ENCODE measurements at regions of chr19 and their contacts with region 1.

Region 1: DNA sequence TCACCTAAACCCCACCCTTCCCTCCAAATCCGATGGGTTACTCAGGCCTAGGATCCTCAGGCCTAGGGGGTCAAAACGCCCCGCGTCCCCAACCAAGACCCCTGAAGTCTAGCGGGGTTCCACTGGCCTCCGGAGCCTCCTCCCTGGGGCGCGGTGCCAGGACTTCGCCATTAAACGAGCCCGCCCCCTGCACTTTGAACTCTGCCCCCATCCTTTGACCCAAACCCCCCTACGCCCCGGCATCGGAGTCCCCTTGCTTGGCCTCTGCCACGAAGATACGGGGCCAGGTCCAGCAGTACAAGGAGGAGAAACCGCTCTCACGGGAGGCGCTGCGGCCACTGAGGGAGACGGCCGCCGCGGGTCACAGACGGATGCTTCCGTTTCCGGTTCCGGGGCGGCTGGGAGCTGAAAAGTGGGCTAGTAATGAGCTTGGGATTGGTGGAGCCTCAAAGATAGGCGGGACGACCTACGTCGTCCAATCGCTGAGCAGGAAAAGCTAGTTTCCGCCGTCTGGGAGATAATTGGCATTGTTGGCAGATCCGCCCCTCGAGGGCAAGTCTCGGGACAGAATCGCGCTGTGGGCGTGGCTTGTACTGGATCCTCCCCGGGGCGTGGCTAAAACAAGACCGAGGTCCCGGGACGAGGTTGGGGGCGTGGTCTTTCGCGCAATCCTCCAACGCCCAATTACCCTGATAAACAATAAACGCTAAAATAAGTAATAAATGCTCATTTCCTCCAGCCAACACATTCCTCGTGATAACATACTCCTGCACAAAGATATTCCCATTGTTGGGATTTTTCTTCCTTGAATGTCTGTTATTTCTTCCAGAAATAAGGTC is 5.7 kb upstream of the ZNF77 start:
- DNase-seq: peak; percentile 99 to 100 (median 100)
- H3K4me3 ChIP-seq: peak overlapping the region; percentile 62 to 87
- H3K4me3 Mint-ChIP-seq: peak overlapping the region; percentile 93 to 98 (median 96)
- H3K27ac ChIP-seq: peak overlapping the region; percentile 93
- H3K27ac Mint-ChIP-seq: peak overlapping the region; percentile 92 to 100 (median 99)
- H3K4me1 ChIP-seq: peaks cover 22% of the 10 kb centered on the region
- H3K4me1 Mint-ChIP-seq: peaks cover 17 to 35% (median 23%) of the 10 kb centered on the region in 4 donors
- H3K27me3 ChIP-seq: no peaks in the 10 kb centered on the region
- H3K27me3 Mint-ChIP-seq: no peaks in the 10 kb centered on the region

Region 2: GRCh38 chr19:2900296-2901252 is 49.9 kb before region 1 on chr19 and contains the start of gene ZNF57:
- CTCF ChIA-PET with region 1: interaction called, 3 read pairs
- POLR2A ChIA-PET with region 1: interaction called, 12 read pairs
- intact Hi-C with region 1: loop called (anchors 2 kb)
- DNase-seq: peak; percentile 92 to 98 (median 97)
- H3K4me3 ChIP-seq: peak within 1 kb of the TSS; percentile 52 to 90
- H3K4me3 Mint-ChIP-seq: peak within 1 kb of the TSS; percentile 93 to 100 (median 96)
- H3K27ac ChIP-seq: peak within 1 kb of the TSS; percentile 47
- H3K27ac Mint-ChIP-seq: peak within 1 kb of the TSS; percentile 81 to 94 (median 92)
- H3K4me1 ChIP-seq: peaks cover 15% of the 10 kb centered on the region
- H3K4me1 Mint-ChIP-seq: peaks cover 15 to 29% (median 20%) of the 10 kb centered on the region in 4 donors
- H3K27me3 ChIP-seq: no peaks in the 10 kb centered on the region
- H3K27me3 Mint-ChIP-seq: no peaks in the 10 kb centered on the region
- total RNA-seq, gene ZNF57: 4.2 to 4.7 TPM

Region 3: DNA sequence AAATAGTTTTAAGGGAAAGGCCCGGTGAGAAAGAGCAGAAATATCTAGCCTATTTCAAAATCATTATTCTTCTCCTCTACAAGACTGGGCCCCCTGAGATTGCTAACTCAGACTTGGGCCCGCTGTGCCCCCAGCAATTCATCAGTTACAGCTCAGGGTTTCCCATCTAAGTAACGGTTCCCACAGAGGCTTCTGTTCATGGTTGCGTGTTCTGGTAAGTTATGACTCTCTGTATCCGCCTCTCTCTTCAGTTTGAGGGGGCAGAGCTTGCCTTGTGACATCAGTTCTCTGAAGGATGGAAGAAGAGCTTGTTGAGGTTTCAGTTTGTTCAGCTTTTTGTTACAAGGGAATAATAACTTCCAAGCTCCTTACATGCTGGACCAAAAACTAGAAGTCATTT is 38.2 kb before region 1 on chr19:
- CTCF ChIA-PET with region 1: no interaction called
- POLR2A ChIA-PET with region 1: no interaction called
- intact Hi-C with region 1: no loop called
- DNase-seq: no peak
- H3K4me3 ChIP-seq: no peak overlapping the region
- H3K4me3 Mint-ChIP-seq: no peak overlapping the region
- H3K27ac ChIP-seq: no peak overlapping the region
- H3K27ac Mint-ChIP-seq: no peak overlapping the region
- H3K4me1 ChIP-seq: no peaks in the 10 kb centered on the region
- H3K4me1 Mint-ChIP-seq: peaks cover 9 to 15% (median 13%) of the 10 kb centered on the region in 4 donors
- H3K27me3 ChIP-seq: no peaks in the 10 kb centered on the region
- H3K27me3 Mint-ChIP-seq: no peaks in the 10 kb centered on the region

Region 4: DNA sequence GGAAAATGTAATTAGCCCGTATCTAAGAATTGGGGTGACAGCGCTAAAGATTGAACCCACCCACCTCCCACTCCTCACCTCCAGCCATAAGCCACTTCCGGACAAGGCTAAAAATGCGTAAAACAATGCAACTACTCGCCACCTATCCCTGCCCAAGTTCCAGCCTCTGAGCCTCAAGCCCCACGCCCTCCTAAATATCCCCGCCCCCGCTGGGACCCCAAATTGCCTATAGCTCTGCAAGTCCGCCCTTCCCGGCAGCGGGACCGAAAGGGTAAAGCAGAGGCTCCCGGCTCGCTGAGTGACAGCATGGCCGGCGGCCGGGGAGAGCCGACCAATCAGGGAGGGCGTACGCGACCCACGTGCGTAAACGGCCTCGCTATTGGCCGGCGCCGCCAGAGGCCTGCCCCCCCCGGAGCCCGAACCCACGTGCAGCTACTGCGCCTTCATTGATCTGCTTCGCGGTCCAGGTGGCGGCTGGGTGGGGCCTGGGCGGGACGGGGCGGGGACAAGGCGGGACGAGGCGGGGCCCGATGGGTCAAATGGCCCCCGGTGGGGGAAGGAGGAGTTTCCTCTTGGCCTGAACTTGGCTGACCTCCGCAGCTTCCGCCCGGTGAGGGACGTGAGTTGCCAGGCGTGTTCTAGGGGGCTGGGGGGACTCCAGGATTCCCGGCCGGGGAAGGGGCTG is 26.6 kb after region 1 on chr19 and contains the start of gene TLE6:
- CTCF ChIA-PET with region 1: interaction called, 8 read pairs
- POLR2A ChIA-PET with region 1: interaction called, 10 read pairs
- intact Hi-C with region 1: no loop called
- DNase-seq: peak; percentile 92 to 94 (median 93)
- H3K4me3 ChIP-seq: peak within 1 kb of the TSS; percentile 54 to 90
- H3K4me3 Mint-ChIP-seq: peak within 1 kb of the TSS; percentile 90 to 99 (median 94)
- H3K27ac ChIP-seq: peak within 1 kb of the TSS; percentile 17
- H3K27ac Mint-ChIP-seq: peak within 1 kb of the TSS; percentile 68 to 97 (median 90)
- H3K4me1 ChIP-seq: peaks cover 13% of the 10 kb centered on the region
- H3K4me1 Mint-ChIP-seq: peaks cover 6 to 19% (median 14%) of the 10 kb centered on the region in 4 donors
- H3K27me3 ChIP-seq: no peaks in the 10 kb centered on the region
- H3K27me3 Mint-ChIP-seq: peaks cover 0 to 6% of the 10 kb centered on the region in 2 donors
- total RNA-seq, gene TLE6: not detected

Region 5: GRCh38 chr19:3062168-3063102 is 111.9 kb after region 1 on chr19 and contains the start of gene TLE5:
- CTCF ChIA-PET with region 1: interaction called, 5 read pairs
- POLR2A ChIA-PET with region 1: interaction called, 38 read pairs
- intact Hi-C with region 1: loop called (anchors 5 kb)
- DNase-seq: peak; percentile 77 to 82 (median 79)
- H3K4me3 ChIP-seq: peak within 1 kb of the TSS in 1 of 2 donors; percentile 65
- H3K4me3 Mint-ChIP-seq: peak within 1 kb of the TSS; percentile 87 to 95 (median 90)
- H3K27ac ChIP-seq: peak within 1 kb of the TSS; percentile 62
- H3K27ac Mint-ChIP-seq: peak within 1 kb of the TSS; percentile 93 to 97 (median 96)
- H3K4me1 ChIP-seq: peaks cover 55% of the 10 kb centered on the region
- H3K4me1 Mint-ChIP-seq: peaks cover 16 to 51% (median 35%) of the 10 kb centered on the region in 4 donors
- H3K27me3 ChIP-seq: no peaks in the 10 kb centered on the region
- H3K27me3 Mint-ChIP-seq: no peaks in the 10 kb centered on the region
- total RNA-seq, gene TLE5: 876 to 900 TPM

Region 6: GRCh38 chr19:3108775-3109174 is 158.3 kb after region 1 on chr19:
- CTCF ChIA-PET with region 1: interaction called, 375 read pairs
- POLR2A ChIA-PET with region 1: interaction called, 11 read pairs
- intact Hi-C with region 1: loop called (anchors 1 kb)
- DNase-seq: peak; percentile 60 to 74 (median 66)
- H3K4me3 ChIP-seq: no peak overlapping the region
- H3K4me3 Mint-ChIP-seq: peak overlapping the region in 2 of 8 donors; percentile 1 to 54
- H3K27ac ChIP-seq: no peak overlapping the region
- H3K27ac Mint-ChIP-seq: peak overlapping the region in 1 of 7 donors; percentile 72
- H3K4me1 ChIP-seq: peaks cover 12% of the 10 kb centered on the region
- H3K4me1 Mint-ChIP-seq: peaks cover 5 to 11% (median 10%) of the 10 kb centered on the region in 4 donors
- H3K27me3 ChIP-seq: no peaks in the 10 kb centered on the region
- H3K27me3 Mint-ChIP-seq: peaks cover 0 to 2% of the 10 kb centered on the region in 2 donors

Region 7: GRCh38 chr19:3163230-3163886 is 212.9 kb after region 1 on chr19:
- CTCF ChIA-PET with region 1: interaction called, 5 read pairs
- POLR2A ChIA-PET with region 1: no interaction called
- intact Hi-C with region 1: loop called (anchors 5 kb)
- DNase-seq: peak; percentile 69 to 73 (median 71)
- H3K4me3 ChIP-seq: no peak overlapping the region
- H3K4me3 Mint-ChIP-seq: peak overlapping the region in 3 of 8 donors; percentile 5 to 55 (median 55)
- H3K27ac ChIP-seq: no peak overlapping the region
- H3K27ac Mint-ChIP-seq: peak overlapping the region; percentile 62 to 92 (median 77)
- H3K4me1 ChIP-seq: peaks cover 11% of the 10 kb centered on the region
- H3K4me1 Mint-ChIP-seq: peaks cover 9 to 30% (median 15%) of the 10 kb centered on the region in 4 donors
- H3K27me3 ChIP-seq: no peaks in the 10 kb centered on the region
- H3K27me3 Mint-ChIP-seq: no peaks in the 10 kb centered on the region

Measured in CD4-positive, alpha-beta memory T cell (primary cell).